ENCODE measurements at regions of chr9 and their contacts with region 1.

Region 1: GRCh38 chr9:88534456-88535261 is at the start of gene NXNL2:
- DNase-seq: peak; percentile 50
- H3K4me3 ChIP-seq: peak within 1 kb of the TSS; percentile 85
- H3K27me3 ChIP-seq: no peaks in the 10 kb centered on the region
- CTCF ChIP-seq: no peak
- polyA plus RNA-seq, gene NXNL2: 3.6 and 5.5 TPM in 2 replicates

Region 2: DNA sequence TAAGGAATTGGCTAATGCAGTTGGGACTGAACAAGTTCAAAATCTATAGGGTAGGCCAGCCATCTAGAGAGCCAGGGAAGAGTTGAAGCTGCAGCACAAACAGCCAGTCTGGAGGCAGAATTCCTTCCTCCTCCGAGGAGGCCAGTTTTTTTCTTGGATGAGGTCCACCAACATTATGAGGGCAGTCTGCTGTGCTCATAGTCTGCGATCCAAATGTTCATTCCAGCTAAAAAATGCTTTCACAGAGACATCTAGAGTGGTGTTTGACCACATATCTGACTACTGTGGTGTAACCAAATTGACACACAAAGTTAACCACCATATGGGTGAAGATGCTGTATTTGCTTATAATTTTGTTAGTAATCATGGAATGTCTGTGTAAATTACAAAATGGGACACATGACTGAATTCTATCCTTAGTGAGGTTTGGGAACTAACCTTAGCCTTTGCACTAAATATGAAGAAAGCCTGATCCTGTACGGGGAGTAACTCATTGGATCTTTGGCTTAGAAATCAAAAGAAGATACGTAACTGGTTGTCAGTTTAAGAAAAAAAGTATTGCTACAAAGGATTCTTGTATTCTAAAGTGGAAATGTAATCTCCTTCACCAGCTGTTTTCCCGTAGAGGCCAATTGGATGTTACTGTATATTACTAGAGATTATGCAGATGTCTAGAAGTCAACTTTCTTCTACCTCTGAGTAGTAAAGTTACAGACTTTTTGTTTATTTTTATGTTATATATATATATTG is 75.8 kb before region 1 on chr9:
- CTCF ChIA-PET with region 1: no interaction called
- POLR2A ChIA-PET with region 1: no interaction called
- DNase-seq: peak; percentile 87
- H3K4me3 ChIP-seq: no peak overlapping the region
- H3K27me3 ChIP-seq: no peaks in the 10 kb centered on the region
- CTCF ChIP-seq: no peak

Region 3: GRCh38 chr9:89116064-89116804 is 581.6 kb after region 1 on chr9:
- CTCF ChIA-PET with region 1: no interaction called
- POLR2A ChIA-PET with region 1: interaction called, 12 read pairs
- DNase-seq: peak; percentile 59
- H3K4me3 ChIP-seq: no peak overlapping the region
- H3K27me3 ChIP-seq: no peaks in the 10 kb centered on the region
- CTCF ChIP-seq: no peak

Measured in BJ (cell line).